Heart left ventricle (tissue), 16 donors: ENCODE measurements at regions of chr13 and their contacts with region 1.

Region 1: GRCh38 chr13:33139184-33139583 is 123.0 kb downstream of the KL start:
- DNase-seq: peak; percentile 65 to 90 (median 75)
- ATAC-seq: peak; percentile 76 to 92 (median 88)
- H3K4me3 ChIP-seq: no peak overlapping the region
- H3K27ac ChIP-seq: peak overlapping the region in 9 of 12 donors; percentile 20 to 53 (median 40)
- H3K4me1 ChIP-seq: peaks cover 0 to 45% (median 26%) of the 10 kb centered on the region in 12 donors
- H3K27me3 ChIP-seq: no peaks in the 10 kb centered on the region
- CTCF ChIP-seq: no peak
- POLR2A ChIP-seq: no peak

Region 2: DNA sequence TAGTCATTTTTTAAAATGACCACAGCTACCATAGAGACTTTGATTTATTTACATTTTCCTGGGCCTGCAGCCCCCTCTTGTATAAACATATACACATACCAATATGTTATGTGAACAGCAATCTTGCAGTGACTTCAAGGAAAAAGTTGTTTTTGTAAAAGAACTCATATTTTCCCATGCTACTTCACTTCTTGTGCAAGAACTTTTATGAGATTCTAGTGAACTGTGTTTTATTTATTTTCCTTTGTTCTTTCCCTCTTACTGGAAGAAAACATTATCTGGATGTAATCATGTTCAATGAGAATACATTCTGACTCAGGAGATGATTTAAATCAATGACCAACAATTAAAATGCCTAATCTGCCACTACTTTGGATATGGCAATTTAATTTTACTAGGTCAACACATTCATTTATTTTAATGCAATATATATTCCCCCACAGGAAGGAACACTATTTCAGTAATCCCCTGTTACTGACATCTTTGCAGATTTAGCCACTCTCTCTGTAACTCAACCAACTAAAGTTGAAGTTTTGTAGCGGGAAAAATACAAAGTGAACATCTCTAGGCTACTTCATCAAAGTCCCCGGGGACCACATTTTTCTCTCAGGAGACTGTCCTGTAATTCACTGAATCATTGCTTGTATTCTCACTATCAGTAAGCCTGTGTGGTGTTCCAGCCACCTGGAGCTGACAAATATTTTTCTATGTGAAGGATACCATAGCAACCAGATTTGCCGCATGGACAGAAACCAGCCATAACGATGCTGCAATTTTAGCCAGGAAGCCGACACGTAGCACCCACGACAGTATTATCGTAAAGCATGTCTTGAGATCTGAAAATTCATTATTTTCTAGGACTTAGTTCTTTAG is 55.9 kb after region 1 on chr13:
- intact Hi-C with region 1: loop called in 1 of 10 experiments (anchors 10 kb)
- DNase-seq: peak in 3 of 5 donors; percentile 33 to 50 (median 42)
- ATAC-seq: peak; percentile 50 to 79 (median 58)
- H3K4me3 ChIP-seq: peak overlapping the region in 3 of 12 donors; percentile 8 to 10 (median 10)
- H3K27ac ChIP-seq: peak overlapping the region in 9 of 12 donors; percentile 0 to 88 (median 39)
- H3K4me1 ChIP-seq: peaks cover 9 to 100% (median 74%) of the 10 kb centered on the region in 12 donors
- H3K27me3 ChIP-seq: no peaks in the 10 kb centered on the region
- CTCF ChIP-seq: no peak
- POLR2A ChIP-seq: no peak

Region 3: DNA sequence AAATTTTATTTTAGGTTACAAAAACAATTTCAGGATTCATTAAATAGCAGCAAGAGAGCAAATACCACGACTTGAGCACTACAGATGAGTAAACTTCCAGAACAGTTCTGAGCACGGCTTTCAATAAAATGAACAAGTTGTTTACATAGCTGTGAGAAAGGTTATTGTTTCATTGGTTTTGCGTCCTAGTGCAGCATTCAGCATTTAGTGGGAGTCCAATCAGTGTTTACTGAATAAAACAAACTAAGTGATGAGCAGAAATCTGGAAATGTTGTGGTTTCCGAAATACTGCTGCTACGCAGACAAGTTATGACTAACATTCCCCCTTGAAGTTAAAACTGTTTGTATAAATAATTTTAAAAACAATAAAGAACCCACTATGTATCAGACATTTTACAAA is 397.8 kb after region 1 on chr13:
- intact Hi-C with region 1: loop called in 1 of 10 experiments (anchors 10 kb)
- DNase-seq: no peak
- ATAC-seq: no peak
- H3K4me3 ChIP-seq: peak overlapping the region in 1 of 12 donors; percentile 17
- H3K27ac ChIP-seq: peak overlapping the region in 4 of 12 donors; percentile 4 to 97 (median 26)
- H3K4me1 ChIP-seq: peaks cover 0 to 37% (median 14%) of the 10 kb centered on the region in 12 donors
- H3K27me3 ChIP-seq: no peaks in the 10 kb centered on the region
- CTCF ChIP-seq: no peak
- POLR2A ChIP-seq: no peak